AG04450 (cell line): ENCODE measurements at regions of chr3 and their contacts with region 1.

Region 1: GRCh38 chr3:141979050-141979671 is 102.7 kb downstream of the ATP1B3 start:
- DNase-seq: peak; percentile 26
- H3K4me3 ChIP-seq: no peak overlapping the region
- H3K27ac ChIP-seq: no peak overlapping the region
- H3K27me3 ChIP-seq: no peaks in the 10 kb centered on the region
- CTCF ChIP-seq: no peak

Region 2: GRCh38 chr3:141605883-141606282 is 373.3 kb before region 1 on chr3:
- CTCF ChIA-PET with region 1: no interaction called
- POLR2A ChIA-PET with region 1: no interaction called
- DNase-seq: no peak
- H3K4me3 ChIP-seq: no peak overlapping the region
- H3K27ac ChIP-seq: no peak overlapping the region
- H3K27me3 ChIP-seq: no peaks in the 10 kb centered on the region
- CTCF ChIP-seq: no peak

Region 3: DNA sequence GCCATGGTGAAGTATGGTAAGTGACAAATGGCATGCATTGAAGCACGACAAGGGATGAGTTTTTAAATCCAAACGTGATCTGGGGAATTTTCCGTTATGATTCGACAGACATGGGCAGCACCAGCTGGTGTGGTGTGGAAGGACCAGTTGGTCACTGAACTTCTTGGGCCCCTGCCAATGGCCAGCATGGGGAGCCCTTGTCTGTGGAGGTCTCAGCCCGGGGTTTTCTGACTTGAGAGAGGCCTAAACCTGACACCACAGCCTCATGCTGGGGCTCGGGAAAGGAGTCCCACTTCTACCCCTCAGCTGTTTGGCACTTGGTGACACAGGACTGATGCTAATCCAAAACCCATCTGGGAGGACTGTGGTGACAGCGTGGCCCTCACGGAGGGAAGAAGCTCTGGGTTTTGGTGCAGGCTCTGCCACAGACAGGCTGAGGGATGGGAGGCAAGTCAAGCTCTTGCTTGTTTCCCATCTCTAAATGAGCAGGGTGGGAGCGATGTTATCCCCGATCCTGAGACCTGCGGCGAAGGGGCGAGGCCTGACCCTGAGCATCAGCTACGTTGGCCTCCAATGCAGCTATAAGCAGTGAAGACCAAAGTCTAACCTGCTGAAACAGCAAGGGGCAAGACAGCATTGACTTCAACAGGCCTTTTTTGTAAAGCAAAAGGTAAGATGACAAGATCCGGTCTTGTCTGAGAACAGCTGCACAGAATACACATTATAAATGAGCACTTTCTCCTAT is 33.2 kb before region 1 on chr3:
- CTCF ChIA-PET with region 1: no interaction called
- POLR2A ChIA-PET with region 1: interaction called, 10 read pairs
- DNase-seq: no peak
- H3K4me3 ChIP-seq: no peak overlapping the region
- H3K27ac ChIP-seq: no peak overlapping the region
- H3K27me3 ChIP-seq: no peaks in the 10 kb centered on the region
- CTCF ChIP-seq: no peak